ENCODE measurements at regions of chr7 and their contacts with region 1.

Region 1: DNA sequence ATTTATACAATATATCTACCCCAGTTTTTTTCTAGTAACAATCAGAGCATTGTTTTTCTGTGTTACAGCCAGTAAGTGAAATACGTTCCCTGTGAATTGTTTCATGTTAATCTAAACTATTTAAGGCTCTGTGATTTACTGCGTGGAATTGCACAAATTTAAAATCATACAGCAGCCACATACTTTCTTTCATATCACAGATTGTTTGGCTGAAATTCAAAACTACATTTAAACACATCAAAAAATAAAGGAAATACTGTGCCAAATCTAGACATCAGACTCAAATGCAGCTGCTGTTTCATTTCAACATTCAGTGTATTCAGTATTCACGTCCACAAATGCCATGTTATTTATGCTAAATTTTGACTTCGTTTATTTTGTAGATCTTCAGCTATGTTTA is 242.6 kb upstream of the HGF start:
- DNase-seq: peak; percentile 29

Region 2: GRCh38 chr7:81339946-81340345 is 672.5 kb before region 1 on chr7:
- in situ Hi-C with region 1: no loop called
- DNase-seq: no peak

Region 3: GRCh38 chr7:81491573-81491972 is 520.9 kb before region 1 on chr7:
- in situ Hi-C with region 1: loop called (anchors 5 kb)
- DNase-seq: no peak

Region 4: GRCh38 chr7:81937091-81937490 is 75.4 kb before region 1 on chr7:
- in situ Hi-C with region 1: no loop called
- DNase-seq: no peak

Region 5: DNA sequence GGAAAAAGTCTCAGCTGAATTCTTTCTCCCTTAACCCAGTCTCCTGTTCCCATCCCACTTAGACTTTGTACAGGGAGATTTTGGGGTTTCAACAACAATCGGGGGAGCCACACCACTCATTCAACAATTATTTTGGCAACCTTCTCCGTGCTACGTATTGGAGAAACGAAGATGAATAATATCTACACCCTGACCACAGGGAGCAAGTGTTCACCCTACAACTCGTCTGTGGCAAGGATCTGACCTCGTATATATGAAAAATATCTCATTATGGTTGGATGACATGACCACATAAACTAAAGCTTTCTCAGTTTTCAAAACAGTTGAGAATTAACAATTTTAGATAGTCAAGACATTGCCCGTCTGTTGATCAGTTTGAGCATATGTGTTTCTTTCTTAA is 129.0 kb after region 1 on chr7:
- in situ Hi-C with region 1: no loop called
- DNase-seq: no peak